Activated CD4-positive, alpha-beta memory T cell treated with anti-CD3 and anti-CD28 coated beads, Interleukin-2, amount 10 ng/mL, durations not matched to agents 7 days and 5 days (primary cell): ENCODE measurements at regions of chr21 and their contacts with region 1.

Region 1: DNA sequence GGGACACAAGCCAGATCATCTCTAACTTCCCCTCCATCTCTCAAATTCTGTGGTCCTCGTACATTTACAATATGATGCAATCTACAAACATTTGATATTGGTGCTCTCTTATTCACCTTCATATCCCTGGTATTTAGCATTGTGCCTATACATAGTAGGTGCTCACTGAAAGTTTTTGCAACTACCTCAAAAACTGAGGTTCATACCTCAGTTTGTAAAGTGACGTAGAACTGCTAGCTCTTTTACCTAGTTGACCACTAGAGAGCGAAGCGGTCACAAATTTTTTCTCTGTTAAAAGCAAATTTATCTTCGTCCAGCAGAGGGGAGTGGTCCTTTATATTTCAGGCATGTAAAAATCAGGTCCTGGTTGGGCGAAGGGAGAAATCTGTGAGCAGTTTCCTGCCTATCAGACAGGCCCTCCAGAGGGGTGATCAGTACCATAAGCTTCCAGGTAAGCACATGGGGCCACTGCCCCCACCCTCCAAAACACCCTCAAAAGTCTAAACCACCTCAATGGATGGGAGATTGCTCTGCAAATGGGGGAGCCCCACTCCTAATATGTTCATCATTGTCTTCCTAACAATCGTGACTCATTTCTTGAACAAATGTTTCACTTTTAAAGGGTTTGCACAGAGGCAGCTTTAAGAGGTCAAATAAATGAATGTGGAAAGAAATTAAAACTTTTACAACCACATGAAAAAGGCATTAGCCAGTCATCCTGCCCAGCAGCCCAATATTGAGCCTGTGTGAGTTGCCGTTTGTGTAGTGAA is 10.6 kb upstream of the HLCS start:
- DNase-seq: peak; percentile 31
- H3K4me3 Mint-ChIP-seq: no peak overlapping the region
- H3K27ac Mint-ChIP-seq: peak overlapping the region; percentile 29
- H3K4me1 Mint-ChIP-seq: peaks cover 25% of the 10 kb centered on the region
- H3K27me3 Mint-ChIP-seq: peaks cover 10% of the 10 kb centered on the region

Region 2: DNA sequence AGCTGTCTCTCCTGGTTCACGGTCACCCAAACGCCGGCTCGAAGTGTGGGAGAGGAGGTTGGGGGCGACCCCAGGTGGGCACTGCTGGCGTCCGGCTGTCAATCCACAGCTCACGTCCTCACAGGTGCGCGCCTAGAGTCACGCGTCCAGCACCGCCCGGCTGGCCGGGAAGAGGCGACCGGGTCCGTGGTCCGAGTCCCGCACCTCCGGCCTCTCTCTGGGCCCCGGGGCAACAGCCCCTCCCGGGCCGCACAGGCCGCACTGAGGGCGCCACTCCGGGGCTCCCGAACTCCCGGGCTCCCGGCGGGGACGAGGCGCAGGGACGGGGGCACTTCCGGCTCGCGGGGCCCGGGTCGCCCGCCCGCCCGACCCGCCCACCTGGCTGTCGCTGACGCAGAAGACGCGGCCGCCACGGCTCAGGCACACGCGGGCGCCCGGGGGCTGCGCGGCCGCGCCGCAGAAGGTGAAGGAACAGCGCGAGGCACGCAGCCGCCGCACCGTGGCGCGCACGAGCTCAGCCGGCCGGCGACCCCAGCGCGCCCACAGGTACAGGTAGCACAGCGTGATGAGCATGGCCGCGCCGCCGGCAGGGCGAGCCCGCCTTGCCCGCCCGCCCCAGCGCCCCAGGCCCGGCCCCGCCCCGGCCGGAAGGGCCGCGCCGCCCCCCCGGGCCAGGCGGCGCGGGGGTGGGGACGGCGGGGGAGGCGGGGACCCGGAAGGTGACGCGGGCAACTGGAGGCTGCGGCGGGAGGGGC is 10.8 kb before region 1 on chr21 and contains the start of gene HLCS:
- CTCF ChIA-PET with region 1: interaction called, 26 read pairs
- POLR2A ChIA-PET with region 1: interaction called, 14 read pairs
- DNase-seq: peak; percentile 81
- H3K4me3 Mint-ChIP-seq: peak within 1 kb of the TSS; percentile 73
- H3K27ac Mint-ChIP-seq: peak within 1 kb of the TSS; percentile 77
- H3K4me1 Mint-ChIP-seq: peaks cover 23% of the 10 kb centered on the region
- H3K27me3 Mint-ChIP-seq: no peaks in the 10 kb centered on the region
- total RNA-seq, gene HLCS: 13.3 to 13.9 TPM

Region 3: DNA sequence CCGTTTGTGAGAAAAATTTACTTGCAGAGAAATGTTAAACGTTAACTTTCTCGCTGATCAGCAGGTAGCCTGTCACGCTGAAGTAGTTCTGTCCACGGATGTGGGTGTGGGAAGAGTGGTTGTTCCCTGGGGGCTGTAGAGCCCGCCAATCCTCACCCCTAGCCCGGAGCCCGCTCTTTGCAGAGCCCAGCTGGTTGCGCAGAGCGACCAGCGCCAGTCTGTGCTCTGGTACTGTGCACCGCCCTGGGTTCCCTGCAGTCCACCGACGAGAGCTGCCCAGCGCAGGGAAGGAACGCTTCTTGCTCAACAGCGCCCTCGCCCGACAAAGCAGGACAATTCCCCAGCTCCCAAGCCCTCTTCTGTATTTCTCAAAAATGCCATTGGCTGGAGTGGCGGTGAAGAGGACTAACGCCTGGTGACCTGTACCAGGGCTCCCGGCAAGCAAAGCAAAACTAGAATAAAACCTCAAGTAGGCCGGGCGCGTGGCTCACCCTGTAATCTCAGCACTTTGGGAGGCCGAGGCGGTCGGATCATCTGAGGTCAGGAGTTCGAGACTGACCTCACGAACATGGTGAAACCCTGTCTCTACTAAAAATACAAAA is 32.8 kb after region 1 on chr21:
- CTCF ChIA-PET with region 1: interaction called, 14 read pairs
- POLR2A ChIA-PET with region 1: interaction called, 3 read pairs
- DNase-seq: peak; percentile 80
- H3K4me3 Mint-ChIP-seq: peak overlapping the region; percentile 58
- H3K27ac Mint-ChIP-seq: no peak overlapping the region
- H3K4me1 Mint-ChIP-seq: peaks cover 14% of the 10 kb centered on the region
- H3K27me3 Mint-ChIP-seq: peaks cover 28% of the 10 kb centered on the region